ENCODE measurements at regions of chr9 and their contacts with region 1.

Region 1: GRCh38 chr9:38700695-38701094 is 19.2 kb downstream of the FAM240B start:
- DNase-seq: no peak

Region 2: GRCh38 chr9:38208206-38208901 is 492.3 kb before region 1 on chr9:
- intact Hi-C with region 1: no loop called
- DNase-seq: no peak

Region 3: DNA sequence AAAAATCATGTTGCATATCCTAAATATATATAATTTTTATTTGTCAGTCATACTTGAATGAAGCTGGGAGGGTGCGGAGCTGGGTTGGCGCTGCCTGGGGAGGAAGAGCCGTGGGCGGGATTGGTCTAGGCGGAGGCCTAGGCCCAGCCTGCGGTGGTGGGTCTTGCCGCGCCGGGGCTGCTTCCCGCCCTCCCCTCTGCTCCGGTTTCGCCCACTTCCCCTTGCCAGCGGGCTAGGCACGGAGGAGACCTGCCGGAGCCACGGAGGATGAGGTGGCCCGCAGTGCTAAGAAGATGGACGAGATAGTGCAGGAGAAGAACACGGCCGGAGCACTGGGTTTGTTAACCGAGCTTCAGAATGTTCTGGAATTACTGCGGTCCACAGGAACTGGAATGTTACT is 222.5 kb before region 1 on chr9:
- intact Hi-C with region 1: no loop called
- DNase-seq: no peak

Region 4: DNA sequence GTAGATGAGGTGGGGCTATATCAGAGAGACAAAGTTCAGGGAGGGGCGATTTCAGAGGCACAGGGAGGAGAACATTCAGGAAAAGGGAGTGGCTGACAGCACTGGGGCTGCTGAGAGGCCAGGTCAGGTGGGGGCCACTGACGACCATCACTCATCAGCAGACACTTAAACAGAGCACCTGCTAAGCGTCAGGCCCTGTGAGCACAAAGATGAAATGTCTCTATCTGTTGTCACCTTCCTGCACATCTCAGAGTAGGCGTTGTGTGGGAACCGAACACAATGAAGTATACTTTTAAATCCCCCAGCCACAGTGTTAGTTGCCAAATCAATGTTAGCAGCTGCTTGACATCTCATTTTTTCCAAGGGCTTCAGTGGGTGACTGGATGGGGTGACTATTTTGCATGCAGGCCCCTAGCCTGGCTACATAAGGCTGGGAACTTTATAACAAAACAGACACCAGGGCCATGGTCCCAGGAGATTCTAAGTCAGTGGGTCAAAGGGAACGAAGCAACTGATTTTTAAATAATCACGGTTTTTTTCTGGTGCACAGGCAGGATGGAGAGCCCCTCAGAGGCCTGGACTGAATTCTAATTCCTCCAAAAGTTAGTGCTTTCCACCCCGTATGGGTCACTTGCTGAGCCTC is 49.2 kb before region 1 on chr9:
- intact Hi-C with region 1: no loop called
- DNase-seq: no peak

Region 5: GRCh38 chr9:38662763-38663593 is 37.7 kb before region 1 on chr9:
- intact Hi-C with region 1: loop called (anchors 5 kb)
- DNase-seq: peak in 9 of 10 donors; percentile 41 to 95 (median 61)

Region 6: DNA sequence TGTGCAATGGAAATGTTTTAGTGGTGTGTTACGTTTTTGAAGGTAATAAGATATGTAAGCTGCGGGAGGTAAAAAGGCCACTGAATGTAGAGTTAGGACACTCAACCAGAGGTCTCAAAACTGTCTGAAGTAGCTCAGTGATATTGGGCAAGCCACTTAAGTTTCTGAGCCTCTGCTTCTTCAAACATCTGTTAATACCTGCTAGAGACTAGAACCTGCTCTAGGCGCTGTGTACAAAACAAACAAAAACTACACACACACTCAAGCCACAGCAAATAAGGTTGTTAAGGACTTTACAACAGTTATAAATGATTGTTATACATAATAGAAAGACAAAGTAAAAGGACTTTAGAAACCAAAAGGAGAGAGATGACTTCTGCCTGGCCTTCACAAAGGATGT is 43.8 kb after region 1 on chr9:
- intact Hi-C with region 1: loop called (anchors 5 kb)
- DNase-seq: no peak

Region 7: DNA sequence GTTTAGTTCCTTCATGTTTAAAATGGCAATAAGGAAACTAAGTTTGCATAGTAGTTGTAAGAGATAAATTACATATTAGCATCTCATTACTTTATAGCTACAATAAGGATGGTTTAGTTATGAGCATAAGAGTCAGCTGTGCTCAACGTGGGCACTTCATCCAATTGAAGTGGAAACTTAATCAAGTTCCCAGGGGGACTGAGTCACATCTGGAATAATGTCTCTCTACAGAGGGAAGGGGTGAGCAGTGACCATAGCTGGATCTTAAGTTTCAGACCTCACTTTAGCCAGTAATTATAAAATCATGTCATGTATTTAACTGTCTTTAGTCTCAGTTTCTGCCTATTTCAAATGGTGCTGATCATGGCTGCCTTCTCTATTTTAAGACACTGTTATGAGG is 56.0 kb after region 1 on chr9:
- intact Hi-C with region 1: no loop called
- DNase-seq: no peak

Measured in posterior cingulate gyrus (tissue), 11 donors.